Dendritic cell treated with granulocyte-macrophage colony-stimulating factor and Interleukin-4, amounts not matched to agents 40 ng/mL and 50 ng/mL, for 4 days (primary cell): ENCODE measurements at regions of chrX and their contacts with region 1.

Region 1: GRCh38 chrX:386768-387575 is at the start of gene PPP2R3B:
- H3K4me3 Mint-ChIP-seq: peak within 1 kb of the TSS; percentile 96
- H3K27ac Mint-ChIP-seq: peak within 1 kb of the TSS; percentile 99
- H3K4me1 Mint-ChIP-seq: peaks cover 5% of the 10 kb centered on the region
- H3K27me3 Mint-ChIP-seq: no peaks in the 10 kb centered on the region

Region 2: DNA sequence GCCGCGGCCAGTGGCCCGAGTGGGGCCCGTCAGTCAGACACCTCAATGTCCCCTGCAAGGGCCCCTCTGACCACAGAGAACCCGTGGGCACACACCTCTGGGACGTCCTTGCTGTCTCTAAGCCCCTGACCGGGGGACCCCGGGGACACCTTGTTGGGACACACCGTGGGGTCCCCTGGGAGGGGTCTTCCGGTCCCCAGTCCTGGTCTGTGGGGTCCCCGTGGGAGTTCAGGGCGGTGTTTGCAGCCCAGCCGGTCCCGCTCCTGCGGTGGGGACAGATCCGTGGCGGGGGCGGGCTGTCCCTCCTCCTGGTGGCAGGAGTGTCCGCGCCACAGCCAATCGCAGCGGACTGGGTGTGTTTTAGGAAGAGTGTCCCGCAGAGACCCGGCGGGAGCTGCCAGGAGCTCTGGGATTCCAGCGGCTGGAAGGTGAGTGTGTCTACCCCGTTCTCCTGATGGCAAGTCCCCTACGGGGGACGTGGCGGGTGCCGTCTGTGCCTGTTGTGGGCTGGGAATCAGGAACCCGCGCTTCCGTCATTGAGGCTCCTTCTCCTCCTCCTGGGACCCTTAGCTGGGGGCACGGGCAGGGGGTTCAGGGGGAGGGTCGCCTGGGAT is 110.9 kb before region 1 on chrX:
- intact Hi-C with region 1: loop called (anchors 5 kb)
- H3K4me3 Mint-ChIP-seq: peak overlapping the region; percentile 88
- H3K27ac Mint-ChIP-seq: peak overlapping the region; percentile 86
- H3K4me1 Mint-ChIP-seq: peaks cover 36% of the 10 kb centered on the region
- H3K27me3 Mint-ChIP-seq: no peaks in the 10 kb centered on the region

Region 3: DNA sequence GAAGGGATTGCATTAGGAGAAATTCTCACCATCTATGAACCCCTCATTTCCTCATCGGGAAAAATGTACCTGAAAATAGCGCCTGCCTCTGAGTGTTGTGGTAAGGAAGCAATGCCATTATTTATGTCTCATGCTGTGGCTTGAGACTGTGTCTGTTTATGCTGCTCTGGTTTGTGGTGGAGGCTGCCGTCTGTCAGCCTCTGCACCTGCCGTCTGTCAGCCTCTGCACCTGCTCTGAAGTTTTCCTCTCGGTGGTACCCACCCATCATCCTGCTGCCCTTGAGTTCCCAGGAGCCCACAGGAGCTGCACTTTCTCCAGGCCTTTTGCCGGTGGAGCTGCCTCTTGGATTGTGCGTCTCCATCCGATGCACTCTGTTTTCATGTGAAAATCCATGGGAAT is 68.2 kb after region 1 on chrX:
- intact Hi-C with region 1: no loop called
- H3K4me3 Mint-ChIP-seq: no peak overlapping the region
- H3K27ac Mint-ChIP-seq: no peak overlapping the region
- H3K4me1 Mint-ChIP-seq: no peaks in the 10 kb centered on the region
- H3K27me3 Mint-ChIP-seq: no peaks in the 10 kb centered on the region

Region 4: DNA sequence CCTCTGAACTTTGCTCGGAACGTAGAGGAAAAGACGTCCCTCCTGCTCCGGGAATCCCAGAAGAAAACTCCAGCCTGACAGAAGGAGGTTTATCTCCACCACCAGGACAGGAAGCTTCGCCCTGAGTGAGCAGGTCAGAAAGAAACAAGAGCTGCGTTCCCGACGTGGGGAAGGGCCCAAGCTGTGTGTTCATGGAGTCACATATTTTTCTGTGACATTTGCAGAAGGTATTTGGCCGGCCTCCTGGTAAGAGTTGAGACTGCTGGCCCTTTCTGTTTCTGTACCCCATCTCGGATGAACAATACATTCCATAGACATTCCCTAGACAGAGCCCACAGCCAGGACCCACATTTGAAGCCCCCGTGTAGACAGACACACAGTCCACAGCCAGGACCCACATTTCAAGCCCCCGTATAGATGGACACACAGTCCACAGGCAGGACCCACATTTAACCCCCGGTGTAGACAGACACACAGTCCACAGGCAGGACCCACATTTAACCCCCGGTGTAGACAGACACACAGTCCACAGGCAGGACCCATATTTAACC is 474.4 kb after region 1 on chrX:
- intact Hi-C with region 1: no loop called
- H3K4me3 Mint-ChIP-seq: no peak overlapping the region
- H3K27ac Mint-ChIP-seq: no peak overlapping the region
- H3K4me1 Mint-ChIP-seq: no peaks in the 10 kb centered on the region
- H3K27me3 Mint-ChIP-seq: peaks cover 2% of the 10 kb centered on the region